Heart right ventricle (tissue), 16 donors: ENCODE measurements at regions of chr11 and their contacts with region 1.

Region 1: DNA sequence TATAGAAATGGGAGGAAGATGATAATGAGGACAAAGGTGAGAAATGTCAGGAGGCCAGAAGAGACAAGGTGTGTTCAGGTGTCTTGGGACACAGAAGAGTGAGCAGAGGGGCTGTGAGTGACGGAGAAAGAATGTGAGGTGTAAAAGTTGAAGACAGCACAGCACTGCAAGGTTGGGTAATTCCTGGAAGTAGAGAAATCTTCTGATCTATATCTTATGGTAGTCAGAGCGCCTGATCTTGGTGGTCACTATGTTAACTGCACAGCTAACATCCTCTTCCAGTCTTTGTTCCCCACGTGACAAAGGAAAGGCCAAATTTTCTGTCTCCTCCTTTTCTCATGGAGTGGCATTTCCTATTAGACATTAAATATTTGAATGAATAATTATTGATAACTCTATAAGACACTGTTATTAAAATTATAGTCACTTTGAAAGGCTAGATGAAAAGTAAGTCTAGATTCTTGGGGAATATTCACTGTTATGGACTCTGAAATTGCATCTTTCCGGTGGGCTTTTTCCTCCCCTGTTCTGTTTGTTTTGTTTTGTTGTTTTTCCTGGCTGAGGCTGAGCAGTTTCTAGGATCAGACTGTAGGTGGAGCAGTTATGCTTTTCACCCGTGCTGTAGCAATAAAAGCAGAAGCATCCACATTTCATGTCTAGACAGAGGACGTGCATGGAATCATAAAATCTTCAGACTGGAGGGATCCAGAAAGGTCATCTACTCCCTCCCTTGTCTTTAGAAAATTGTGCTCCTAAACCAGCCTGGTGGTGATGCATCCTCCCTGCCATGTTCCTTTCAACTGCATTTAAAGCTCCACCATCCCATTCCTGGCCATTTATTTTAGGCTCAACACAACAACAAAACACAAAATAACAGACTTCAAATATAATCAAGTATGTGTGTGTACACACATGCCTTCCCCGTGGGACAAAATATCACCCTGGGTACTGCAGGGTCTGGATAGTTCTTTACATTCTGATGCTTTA is 26.6 kb downstream of the SC5D start:
- DNase-seq: peak in 1 of 2 donors; percentile 14
- ATAC-seq: peak in 6 of 8 donors; percentile 49 to 81 (median 66)
- H3K4me3 ChIP-seq: no peak overlapping the region
- H3K27ac ChIP-seq: no peak overlapping the region
- H3K4me1 ChIP-seq: peaks cover 0 to 3% (median 0%) of the 10 kb centered on the region in 9 donors
- H3K27me3 ChIP-seq: peaks cover 0 to 23% (median 11%) of the 10 kb centered on the region in 7 donors
- CTCF ChIP-seq: peak; percentile 46 to 80 (median 71)

Region 2: GRCh38 chr11:121132196-121132976 is 186.8 kb before region 1 on chr11:
- intact Hi-C with region 1: no loop called
- DNase-seq: no peak
- ATAC-seq: no peak
- H3K4me3 ChIP-seq: no peak overlapping the region
- H3K27ac ChIP-seq: no peak overlapping the region
- H3K4me1 ChIP-seq: peaks cover 0 to 14% (median 6%) of the 10 kb centered on the region in 9 donors
- H3K27me3 ChIP-seq: no peaks in the 10 kb centered on the region
- CTCF ChIP-seq: no peak

Region 3: GRCh38 chr11:121426476-121427399 is 107.6 kb after region 1 on chr11:
- intact Hi-C with region 1: loop called in 2 of 10 experiments (anchors 10 kb)
- DNase-seq: peak; percentile 30 to 56
- ATAC-seq: peak; percentile 79 to 92 (median 84)
- H3K4me3 ChIP-seq: peak overlapping the region in 9 of 10 donors; percentile 16 to 41 (median 33)
- H3K27ac ChIP-seq: peak overlapping the region in 3 of 10 donors; percentile 25 to 38 (median 28)
- H3K4me1 ChIP-seq: peaks cover 0 to 29% (median 0%) of the 10 kb centered on the region in 9 donors
- H3K27me3 ChIP-seq: peaks cover 0 to 5% (median 0%) of the 10 kb centered on the region in 7 donors
- CTCF ChIP-seq: peak in 5 of 9 donors; percentile 24 to 48 (median 41)

Region 4: DNA sequence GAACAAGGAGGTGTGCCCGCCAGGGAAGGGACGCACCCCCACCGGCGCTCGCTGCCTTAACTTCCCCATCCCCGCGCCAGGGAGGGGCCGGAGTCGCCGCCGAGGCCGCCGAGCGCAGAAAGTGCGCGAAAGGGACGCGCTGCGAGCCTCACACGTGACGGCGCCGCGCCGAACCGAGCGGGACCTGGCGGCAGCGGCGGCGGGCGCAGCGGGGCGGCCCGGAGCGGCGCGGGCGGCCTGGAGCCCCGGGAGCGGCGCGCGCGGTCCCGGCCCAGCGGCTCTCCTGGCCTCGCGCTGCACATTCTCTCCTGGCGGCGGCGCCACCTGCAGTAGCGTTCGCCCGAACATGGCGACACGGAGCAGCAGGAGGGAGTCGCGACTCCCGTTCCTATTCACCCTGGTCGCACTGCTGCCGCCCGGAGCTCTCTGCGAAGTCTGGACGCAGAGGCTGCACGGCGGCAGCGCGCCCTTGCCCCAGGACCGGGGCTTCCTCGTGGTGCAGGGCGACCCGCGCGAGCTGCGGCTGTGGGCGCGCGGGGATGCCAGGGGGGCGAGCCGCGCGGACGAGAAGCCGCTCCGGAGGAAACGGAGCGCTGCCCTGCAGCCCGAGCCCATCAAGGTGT is 133.0 kb after region 1 on chr11 and contains the start of gene SORL1:
- intact Hi-C with region 1: loop called in 7 of 10 experiments (anchors 2 to 10 kb)
- DNase-seq: peak; percentile 66 to 76
- ATAC-seq: peak; percentile 87 to 94 (median 90)
- H3K4me3 ChIP-seq: peak within 1 kb of the TSS; percentile 50 to 89 (median 75)
- H3K27ac ChIP-seq: peak within 1 kb of the TSS in 3 of 10 donors; percentile 21 to 90 (median 32)
- H3K4me1 ChIP-seq: peaks cover 0 to 80% (median 5%) of the 10 kb centered on the region in 9 donors
- H3K27me3 ChIP-seq: peaks cover 0 to 26% (median 14%) of the 10 kb centered on the region in 7 donors
- CTCF ChIP-seq: peak in 8 of 9 donors; percentile 38 to 66 (median 44)
- total RNA-seq, gene SORL1: 4.7 to 15.1 (median 9.0) TPM

Region 5: GRCh38 chr11:121534131-121535093 is 215.3 kb after region 1 on chr11:
- intact Hi-C with region 1: loop called in 9 of 10 experiments (anchors 1 to 10 kb)
- DNase-seq: peak in 1 of 2 donors; percentile 15
- ATAC-seq: peak in 5 of 8 donors; percentile 59 to 69 (median 61)
- H3K4me3 ChIP-seq: no peak overlapping the region
- H3K27ac ChIP-seq: no peak overlapping the region
- H3K4me1 ChIP-seq: no peaks in the 10 kb centered on the region
- H3K27me3 ChIP-seq: peaks cover 0 to 6% (median 0%) of the 10 kb centered on the region in 7 donors
- CTCF ChIP-seq: peak in 7 of 9 donors; percentile 32 to 65 (median 49)

Region 6: GRCh38 chr11:122517403-122518379 is 1198.5 kb after region 1 on chr11:
- intact Hi-C with region 1: loop called in 1 of 10 experiments (anchors 10 kb)
- DNase-seq: no peak
- ATAC-seq: no peak
- H3K4me3 ChIP-seq: no peak overlapping the region
- H3K27ac ChIP-seq: no peak overlapping the region
- H3K4me1 ChIP-seq: no peaks in the 10 kb centered on the region
- H3K27me3 ChIP-seq: peaks cover 0 to 3% (median 0%) of the 10 kb centered on the region in 7 donors
- CTCF ChIP-seq: no peak